WTC11 (cell line): ENCODE measurements at regions of chr6 and their contacts with region 1.

Region 1: GRCh38 chr6:32952817-32953739 is at the start of gene HLA-DMA:
- DNase-seq: peak; percentile 84
- ATAC-seq: peak; percentile 97
- H3K4me3 Mint-ChIP-seq: peak within 1 kb of the TSS; percentile 47
- H3K27ac Mint-ChIP-seq: peak within 1 kb of the TSS; percentile 87
- H3K4me1 Mint-ChIP-seq: peaks cover 20% of the 10 kb centered on the region
- H3K27me3 Mint-ChIP-seq: no peaks in the 10 kb centered on the region
- CTCF ChIP-seq: peak; percentile 51; the same call in 1 of the 2 replicates
- total RNA-seq, gene HLA-DMA: 6.0 to 9.3 TPM (median 6.6 TPM) in 3 replicates

Region 2: DNA sequence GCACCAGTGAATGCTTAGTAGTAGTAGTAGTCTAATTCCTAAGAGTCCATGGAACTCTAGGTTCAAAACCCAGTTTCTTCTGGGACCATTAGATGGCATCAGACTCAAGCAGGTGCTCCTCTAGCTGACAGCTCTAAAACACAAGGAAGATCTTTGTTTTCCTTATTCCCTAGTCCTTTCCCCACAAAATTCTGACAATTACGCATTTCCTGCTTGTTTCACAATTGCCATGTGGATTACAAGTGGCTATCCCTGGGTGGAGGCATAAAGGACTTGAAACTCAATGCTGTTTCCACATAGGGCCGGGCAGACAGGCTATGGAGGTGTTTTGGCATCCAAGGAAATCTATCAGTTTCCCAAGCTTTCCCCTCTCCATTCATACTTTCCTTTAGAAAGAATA is 127.1 kb before region 1 on chr6:
- CTCF ChIA-PET with region 1: interaction called, 18 read pairs
- POLR2A ChIA-PET with region 1: no interaction called
- DNase-seq: no peak
- ATAC-seq: peak; percentile 86
- H3K4me3 Mint-ChIP-seq: no peak overlapping the region
- H3K27ac Mint-ChIP-seq: peak overlapping the region; percentile 68; the same call in 1 of the 2 replicates
- H3K4me1 Mint-ChIP-seq: peaks cover 9% of the 10 kb centered on the region
- H3K27me3 Mint-ChIP-seq: no peaks in the 10 kb centered on the region
- CTCF ChIP-seq: no peak

Region 3: DNA sequence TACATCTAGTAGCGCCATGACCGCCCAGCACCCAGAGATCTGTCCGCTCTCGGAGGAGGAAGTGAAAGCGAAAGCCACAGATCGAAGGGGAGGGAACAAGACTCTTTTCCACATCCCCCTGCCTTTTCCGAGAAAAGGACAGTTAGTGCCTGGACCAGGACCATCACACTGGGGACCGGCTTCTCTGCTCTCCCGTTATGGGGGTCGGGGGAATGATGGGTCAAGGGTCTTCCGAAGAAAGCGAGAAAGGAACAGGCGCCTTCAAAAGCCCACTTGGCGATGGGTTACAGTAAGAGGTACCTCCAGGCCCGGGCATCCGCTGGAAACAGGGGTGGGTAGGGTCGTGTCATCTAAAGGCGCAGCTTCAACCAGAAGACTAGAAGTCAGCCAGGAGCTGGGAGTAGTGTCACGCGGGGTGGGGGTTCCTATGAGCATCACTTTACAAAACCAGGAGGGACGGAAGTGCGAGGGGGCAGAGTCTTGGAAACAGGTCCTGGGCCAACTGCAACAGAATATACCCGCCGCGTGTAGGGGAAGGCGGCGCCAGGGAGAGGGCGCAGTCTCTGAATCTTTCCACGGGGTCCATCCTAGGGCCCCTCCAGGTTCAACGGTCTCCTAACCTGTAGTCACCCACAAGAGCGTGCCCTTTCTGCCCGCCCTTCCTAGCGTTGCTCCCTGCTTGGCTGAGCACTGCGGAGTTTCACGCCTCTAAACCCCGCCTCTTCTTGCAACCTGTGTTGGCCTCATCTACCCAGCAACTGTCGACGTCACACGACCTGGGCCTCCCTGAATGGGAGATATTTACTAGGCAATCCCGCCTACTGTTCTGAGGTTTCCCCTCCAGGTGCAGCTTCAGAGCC is 108.9 kb before region 1 on chr6 and contains the start of gene PSMB8:
- CTCF ChIA-PET with region 1: interaction called, 14 read pairs
- POLR2A ChIA-PET with region 1: interaction called, 3 read pairs
- DNase-seq: peak; percentile 96
- ATAC-seq: peak; percentile 93
- H3K4me3 Mint-ChIP-seq: peak within 1 kb of the TSS; percentile 95
- H3K27ac Mint-ChIP-seq: peak within 1 kb of the TSS; percentile 78
- H3K4me1 Mint-ChIP-seq: peaks cover 17% of the 10 kb centered on the region
- H3K27me3 Mint-ChIP-seq: peaks cover 94% of the 10 kb centered on the region
- CTCF ChIP-seq: no peak
- total RNA-seq, gene PSMB8: 13.8 to 22.0 TPM (median 19.4 TPM) in 3 replicates

Region 4: GRCh38 chr6:32868257-32868788 is 84.8 kb before region 1 on chr6:
- CTCF ChIA-PET with region 1: interaction called, 44 read pairs
- POLR2A ChIA-PET with region 1: no interaction called
- DNase-seq: peak; percentile 79
- ATAC-seq: peak; percentile 50
- H3K4me3 Mint-ChIP-seq: no peak overlapping the region
- H3K27ac Mint-ChIP-seq: no peak overlapping the region
- H3K4me1 Mint-ChIP-seq: no peaks in the 10 kb centered on the region
- H3K27me3 Mint-ChIP-seq: peaks cover 16% of the 10 kb centered on the region
- CTCF ChIP-seq: peak; percentile 86

Region 5: DNA sequence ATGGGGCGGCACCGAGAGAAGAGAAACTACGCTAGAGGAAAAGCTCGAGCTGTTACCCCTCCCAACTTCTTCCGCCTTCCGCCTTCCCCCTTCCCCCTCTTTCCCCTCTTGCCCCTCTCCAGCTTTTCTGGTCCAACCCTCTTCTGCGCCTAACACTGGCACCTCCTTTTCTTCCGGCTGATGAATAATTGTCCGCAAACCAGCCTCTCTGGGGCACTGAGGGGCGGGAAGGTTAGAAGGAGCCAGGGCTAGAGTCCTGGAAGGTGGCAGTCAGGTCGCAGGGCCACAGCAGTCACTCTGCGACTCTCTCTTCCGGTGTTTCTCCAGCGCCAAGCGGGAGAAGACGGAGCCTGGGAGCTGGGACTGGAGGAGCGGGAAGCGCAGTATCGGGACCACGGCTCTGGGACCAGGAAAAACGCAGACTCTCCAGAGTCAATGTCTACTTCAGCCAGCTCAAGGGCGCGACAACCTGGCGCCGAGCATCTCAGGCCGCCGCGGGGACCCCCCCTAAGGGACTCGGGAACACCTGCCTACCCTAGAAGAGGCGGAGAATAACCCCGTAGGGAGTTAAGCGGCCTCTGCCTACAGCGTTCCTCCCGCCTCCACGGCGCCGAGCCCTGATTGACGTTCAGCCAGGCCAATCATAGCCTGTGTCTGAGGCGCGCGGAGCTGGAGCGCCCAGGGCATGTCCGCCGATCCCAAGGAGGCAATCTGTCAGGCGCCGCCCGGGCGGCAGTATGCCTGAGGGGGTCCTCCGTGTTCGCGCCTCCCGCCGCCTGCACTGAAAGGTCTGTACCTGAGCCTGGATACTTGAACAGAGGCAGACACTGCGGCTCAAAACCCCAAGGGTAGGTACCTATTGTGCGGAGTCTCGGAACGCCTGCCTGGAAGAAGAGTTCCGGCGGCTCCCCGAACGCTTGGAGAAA is 58.7 kb before region 1 on chr6:
- CTCF ChIA-PET with region 1: interaction called, 46 read pairs
- POLR2A ChIA-PET with region 1: interaction called, 16 read pairs
- DNase-seq: peak; percentile 96
- ATAC-seq: peak; percentile 98
- H3K4me3 Mint-ChIP-seq: peak overlapping the region; percentile 98
- H3K27ac Mint-ChIP-seq: peak overlapping the region; percentile 99
- H3K4me1 Mint-ChIP-seq: peaks cover 13% of the 10 kb centered on the region
- H3K27me3 Mint-ChIP-seq: peaks cover 3% of the 10 kb centered on the region; the same call in 1 of the 2 replicates
- CTCF ChIP-seq: no peak

Region 6: DNA sequence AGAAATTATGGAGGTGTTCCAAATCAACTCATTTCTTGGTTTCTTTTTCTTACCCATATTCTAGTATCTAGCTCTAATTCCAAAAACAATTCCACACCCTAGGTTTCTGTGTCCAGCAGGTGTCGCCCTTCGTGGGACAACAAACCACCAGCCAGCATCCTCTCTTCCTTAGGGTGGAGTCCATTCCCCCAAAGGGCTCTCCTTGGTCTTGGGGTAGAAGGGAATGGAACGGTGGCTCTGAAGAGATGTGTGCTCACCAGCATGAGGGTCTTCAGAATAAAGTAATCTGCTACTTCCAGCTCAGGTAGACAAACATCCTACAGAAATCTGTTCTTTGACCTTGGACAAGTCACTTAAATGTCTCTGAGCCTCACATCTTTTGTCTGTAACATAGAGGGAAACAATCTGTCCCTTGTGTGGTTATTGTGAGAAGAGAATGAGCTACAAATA is 19.4 kb before region 1 on chr6:
- CTCF ChIA-PET with region 1: interaction called, 162 read pairs
- POLR2A ChIA-PET with region 1: interaction called, 3 read pairs
- DNase-seq: peak; percentile 82
- ATAC-seq: peak; percentile 84
- H3K4me3 Mint-ChIP-seq: no peak overlapping the region
- H3K27ac Mint-ChIP-seq: no peak overlapping the region
- H3K4me1 Mint-ChIP-seq: no peaks in the 10 kb centered on the region
- H3K27me3 Mint-ChIP-seq: peaks cover 36% of the 10 kb centered on the region
- CTCF ChIP-seq: peak; percentile 49

Region 7: GRCh38 chr6:32971581-32972352 is 18.7 kb after region 1 on chr6:
- CTCF ChIA-PET with region 1: interaction called, 205 read pairs
- POLR2A ChIA-PET with region 1: interaction called, 74 read pairs
- DNase-seq: peak; percentile 99
- ATAC-seq: peak; percentile 56
- H3K4me3 Mint-ChIP-seq: peak overlapping the region; percentile 98
- H3K27ac Mint-ChIP-seq: peak overlapping the region; percentile 100
- H3K4me1 Mint-ChIP-seq: peaks cover 32% of the 10 kb centered on the region
- H3K27me3 Mint-ChIP-seq: peaks cover 4% of the 10 kb centered on the region; the same call in 1 of the 2 replicates
- CTCF ChIP-seq: no peak